HCT116 (cell line): ENCODE measurements at regions of chr10 and their contacts with region 1.

Region 1: GRCh38 chr10:113385021-113385999 is 167.5 kb upstream of the HABP2 start:
- DNase-seq: peak; percentile 85
- ATAC-seq: peak; percentile 99
- H3K4me3 ChIP-seq: no peak overlapping the region
- H3K27ac ChIP-seq: no peak overlapping the region
- H3K4me1 ChIP-seq: peaks cover 16 to 22% of the 10 kb centered on the region in 2 experiments
- H3K27me3 ChIP-seq: peaks cover 3% of the 10 kb centered on the region; the same call in 1 of the 2 replicates
- CTCF ChIP-seq: peak; percentile 91 to 98 (median 95)
- POLR2A ChIP-seq: no peak
- RAD21 ChIP-seq: peak; percentile 100

Region 2: DNA sequence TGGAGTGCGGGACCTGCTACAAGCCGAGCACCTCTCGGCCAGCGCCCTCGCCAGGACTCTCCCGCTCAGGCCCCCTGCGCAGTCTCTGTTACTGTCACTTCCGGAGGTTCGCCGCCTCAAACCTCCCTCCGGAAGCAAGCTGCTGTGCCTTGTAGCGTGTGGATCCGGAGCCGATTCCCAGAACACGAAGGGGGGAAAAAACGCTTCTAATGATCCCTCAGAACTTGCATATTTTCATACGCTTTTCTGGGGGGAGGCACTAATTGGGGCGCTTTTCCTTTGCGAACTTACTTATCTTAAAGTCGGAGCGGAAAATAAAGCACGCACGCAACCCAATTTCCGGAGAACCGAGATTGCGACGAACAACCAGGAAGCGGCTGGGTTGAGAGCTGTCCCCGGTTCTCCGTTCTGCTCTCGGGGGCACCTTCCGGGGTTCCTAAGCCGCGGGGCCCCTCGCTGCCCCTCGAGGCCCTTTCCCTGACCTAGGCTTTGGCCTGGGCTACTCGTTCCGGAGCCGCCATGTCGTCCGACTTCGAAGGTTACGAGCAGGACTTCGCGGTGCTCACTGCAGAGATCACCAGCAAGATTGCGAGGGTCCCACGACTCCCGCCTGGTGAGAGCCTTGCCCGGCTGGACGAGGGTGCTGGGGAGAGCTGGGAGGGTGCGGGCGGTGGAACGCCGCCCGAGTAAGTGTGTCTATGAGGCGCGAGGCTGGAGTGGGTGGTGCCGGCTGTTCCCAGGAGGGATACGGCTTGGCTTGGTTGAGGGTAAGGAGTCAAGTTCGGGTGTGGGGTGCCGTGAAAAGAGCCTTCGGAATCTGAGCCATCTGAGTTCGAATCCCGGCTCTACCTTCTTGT is 938.2 kb before region 1 on chr10 and contains the starts of genes VTI1A and ZDHHC6:
- CTCF ChIA-PET with region 1: no interaction called
- POLR2A ChIA-PET with region 1: no interaction called
- RAD21 ChIA-PET with region 1: no interaction called
- intact Hi-C with region 1: loop called (anchors 10 kb)
- DNase-seq: peak; percentile 91
- ATAC-seq: peak; percentile 92
- H3K4me3 ChIP-seq: peak within 1 kb of the TSS; percentile 85 to 94
- H3K27ac ChIP-seq: peak within 1 kb of the TSS; percentile 83
- H3K4me1 ChIP-seq: peaks cover 16 to 24% of the 10 kb centered on the region in 2 experiments
- H3K27me3 ChIP-seq: no peaks in the 10 kb centered on the region
- CTCF ChIP-seq: peak in 2 of 3 experiments; percentile 43 to 56; a peak in 4 of 6 replicates
- POLR2A ChIP-seq: no peak
- RAD21 ChIP-seq: no peak
- total RNA-seq, gene VTI1A: 80.7 TPM
- total RNA-seq, gene ZDHHC6: 88.5 TPM

Region 3: GRCh38 chr10:112565434-112566053 is 819.8 kb before region 1 on chr10:
- CTCF ChIA-PET with region 1: interaction called, 3 read pairs
- POLR2A ChIA-PET with region 1: no interaction called
- RAD21 ChIA-PET with region 1: interaction called in 1 of 2 experiments, 4 read pairs
- intact Hi-C with region 1: loop called (anchors 2 kb)
- DNase-seq: peak; percentile 67
- ATAC-seq: peak; percentile 81
- H3K4me3 ChIP-seq: no peak overlapping the region
- H3K27ac ChIP-seq: peak overlapping the region; percentile 0; the same call in 1 of the 2 replicates
- H3K4me1 ChIP-seq: peaks cover 32 to 41% of the 10 kb centered on the region in 2 experiments
- H3K27me3 ChIP-seq: no peaks in the 10 kb centered on the region
- CTCF ChIP-seq: peak; percentile 81 to 90 (median 87)
- POLR2A ChIP-seq: no peak
- RAD21 ChIP-seq: peak; percentile 96

Region 4: DNA sequence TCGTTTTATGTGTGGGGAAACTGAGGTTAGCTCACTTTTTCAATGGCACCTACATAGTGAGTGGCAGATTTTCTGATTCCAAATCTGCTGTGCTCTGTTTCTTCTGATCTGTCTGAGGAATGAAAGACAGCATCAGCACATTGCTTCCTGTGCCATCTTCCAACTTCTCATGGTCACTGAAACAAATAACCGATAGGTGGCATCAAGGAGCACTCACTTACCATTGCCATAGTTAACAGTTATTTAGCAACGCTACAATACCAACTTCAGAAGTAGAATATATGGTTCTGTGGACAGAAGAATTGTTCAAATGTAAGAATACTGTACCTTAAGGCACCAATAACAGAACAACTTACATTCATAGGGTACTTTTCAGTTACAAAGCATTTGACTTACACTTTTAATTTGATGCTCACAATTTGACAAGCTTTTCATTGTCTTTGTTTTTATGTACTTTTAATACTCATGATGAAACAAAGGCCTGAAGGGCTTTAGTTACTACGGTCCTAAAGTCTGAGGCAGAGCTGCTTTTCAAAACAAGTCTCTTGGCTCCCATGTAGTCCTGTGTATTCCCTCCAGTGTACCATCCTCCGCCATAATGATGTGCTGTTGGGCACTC is 664.1 kb before region 1 on chr10:
- CTCF ChIA-PET with region 1: interaction called, 3 read pairs
- POLR2A ChIA-PET with region 1: no interaction called
- RAD21 ChIA-PET with region 1: no interaction called
- intact Hi-C with region 1: loop called (anchors 10 kb)
- DNase-seq: peak; percentile 51
- ATAC-seq: peak; percentile 82
- H3K4me3 ChIP-seq: no peak overlapping the region
- H3K27ac ChIP-seq: no peak overlapping the region
- H3K4me1 ChIP-seq: peaks cover 14 to 21% of the 10 kb centered on the region in 2 experiments
- H3K27me3 ChIP-seq: no peaks in the 10 kb centered on the region
- CTCF ChIP-seq: peak; percentile 39 to 82 (median 80); a peak in 5 of 6 replicates
- POLR2A ChIP-seq: no peak
- RAD21 ChIP-seq: peak; percentile 74

Region 5: GRCh38 chr10:113073549-113074189 is 311.6 kb before region 1 on chr10:
- CTCF ChIA-PET with region 1: interaction called, 4 read pairs
- POLR2A ChIA-PET with region 1: no interaction called
- RAD21 ChIA-PET with region 1: no interaction called
- intact Hi-C with region 1: loop called (anchors 5 kb)
- DNase-seq: peak; percentile 97
- ATAC-seq: peak; percentile 80
- H3K4me3 ChIP-seq: peak overlapping the region; percentile 24
- H3K27ac ChIP-seq: peak overlapping the region; percentile 74
- H3K4me1 ChIP-seq: peaks cover 63 to 73% of the 10 kb centered on the region in 2 experiments
- H3K27me3 ChIP-seq: no peaks in the 10 kb centered on the region
- CTCF ChIP-seq: no peak
- POLR2A ChIP-seq: peak; percentile 77
- RAD21 ChIP-seq: no peak

Region 6: DNA sequence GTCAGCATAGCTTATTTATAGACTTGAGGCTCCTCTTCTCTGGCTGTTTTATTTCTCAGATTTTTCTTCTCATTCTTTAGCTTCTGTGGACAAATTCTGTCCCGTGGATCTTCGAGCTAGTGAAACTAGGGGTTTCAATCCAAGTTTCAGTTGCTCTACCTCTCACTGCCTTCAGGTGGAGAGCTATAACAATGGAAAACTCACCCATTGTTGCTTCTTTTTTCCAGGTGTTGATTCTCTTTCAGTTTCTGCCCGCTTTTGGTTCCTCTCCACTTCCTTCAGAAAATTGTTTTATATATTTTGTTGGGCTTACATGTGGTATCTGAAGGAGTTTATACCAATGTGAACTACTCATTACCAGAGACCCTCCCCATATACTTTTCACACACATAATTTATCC is 169.2 kb before region 1 on chr10:
- CTCF ChIA-PET with region 1: interaction called, 19 read pairs
- POLR2A ChIA-PET with region 1: interaction called, 3 read pairs
- RAD21 ChIA-PET with region 1: interaction called, 10 to 12 read pairs
- intact Hi-C with region 1: loop called (anchors 1 kb)
- DNase-seq: peak; percentile 12
- ATAC-seq: no peak; the same call in 1 of the 2 replicates
- H3K4me3 ChIP-seq: no peak overlapping the region
- H3K27ac ChIP-seq: no peak overlapping the region
- H3K4me1 ChIP-seq: no peaks in the 10 kb centered on the region
- H3K27me3 ChIP-seq: no peaks in the 10 kb centered on the region
- CTCF ChIP-seq: peak; percentile 41 to 48 (median 47); a peak in 5 of 6 replicates
- POLR2A ChIP-seq: no peak
- RAD21 ChIP-seq: peak; percentile 70

Region 7: GRCh38 chr10:113232928-113233511 is 152.3 kb before region 1 on chr10:
- CTCF ChIA-PET with region 1: no interaction called
- POLR2A ChIA-PET with region 1: no interaction called
- RAD21 ChIA-PET with region 1: no interaction called
- intact Hi-C with region 1: no loop called
- DNase-seq: no peak
- ATAC-seq: no peak
- H3K4me3 ChIP-seq: no peak overlapping the region
- H3K27ac ChIP-seq: no peak overlapping the region
- H3K4me1 ChIP-seq: no peaks in the 10 kb centered on the region
- H3K27me3 ChIP-seq: no peaks in the 10 kb centered on the region
- CTCF ChIP-seq: no peak
- POLR2A ChIP-seq: no peak
- RAD21 ChIP-seq: peak; percentile 37

Region 8: DNA sequence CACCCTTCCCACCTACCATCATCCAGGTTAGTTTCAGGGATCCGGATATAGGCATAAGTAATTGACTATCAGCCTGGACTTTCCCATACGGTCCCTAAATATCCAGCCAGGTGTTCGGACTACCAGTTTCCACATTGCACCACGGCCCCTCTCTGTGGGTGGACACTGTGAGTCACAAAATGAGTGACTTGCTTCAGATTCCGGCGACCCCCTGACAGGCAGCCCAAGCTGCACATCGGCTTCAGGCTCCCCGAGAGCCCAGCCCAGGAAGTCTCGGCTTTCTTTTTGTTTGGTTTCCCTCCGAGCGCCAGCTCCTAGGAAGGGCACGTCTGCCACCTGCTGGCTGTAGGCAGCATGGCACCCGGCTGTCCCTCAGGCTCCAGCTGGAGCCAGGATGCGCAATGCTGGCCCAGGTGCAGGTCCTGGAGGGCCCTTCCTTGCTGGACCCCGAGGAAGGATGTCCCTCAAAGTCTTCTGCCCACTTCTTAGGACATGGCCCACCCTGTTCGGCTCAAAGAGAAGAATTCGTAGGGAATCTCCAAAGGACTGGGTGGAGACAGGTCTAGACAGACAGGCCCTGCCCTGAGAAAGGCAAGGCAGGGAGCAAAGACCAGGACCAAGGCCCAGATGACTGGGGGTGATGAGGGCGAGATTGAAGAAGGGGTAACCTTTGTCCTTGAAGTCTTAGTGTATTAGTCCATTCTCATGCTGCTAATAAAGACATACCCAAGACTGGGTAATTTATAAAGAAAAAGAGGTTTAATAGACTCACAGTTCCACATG is 178.2 kb after region 1 on chr10:
- CTCF ChIA-PET with region 1: interaction called, 15 read pairs
- POLR2A ChIA-PET with region 1: no interaction called
- RAD21 ChIA-PET with region 1: interaction called in 1 of 2 experiments, 10 read pairs
- intact Hi-C with region 1: loop called (anchors 5 kb)
- DNase-seq: peak; percentile 52
- ATAC-seq: peak; percentile 97
- H3K4me3 ChIP-seq: peak overlapping the region; percentile 44 to 54
- H3K27ac ChIP-seq: no peak overlapping the region
- H3K4me1 ChIP-seq: peaks cover 5 to 6% of the 10 kb centered on the region in 2 experiments; a peak in 3 of 4 replicates
- H3K27me3 ChIP-seq: no peaks in the 10 kb centered on the region
- CTCF ChIP-seq: peak; percentile 89 to 100 (median 100)
- POLR2A ChIP-seq: no peak
- RAD21 ChIP-seq: peak; percentile 98